ENCODE measurements at regions of chr3 and their contacts with region 1.

Region 1: DNA sequence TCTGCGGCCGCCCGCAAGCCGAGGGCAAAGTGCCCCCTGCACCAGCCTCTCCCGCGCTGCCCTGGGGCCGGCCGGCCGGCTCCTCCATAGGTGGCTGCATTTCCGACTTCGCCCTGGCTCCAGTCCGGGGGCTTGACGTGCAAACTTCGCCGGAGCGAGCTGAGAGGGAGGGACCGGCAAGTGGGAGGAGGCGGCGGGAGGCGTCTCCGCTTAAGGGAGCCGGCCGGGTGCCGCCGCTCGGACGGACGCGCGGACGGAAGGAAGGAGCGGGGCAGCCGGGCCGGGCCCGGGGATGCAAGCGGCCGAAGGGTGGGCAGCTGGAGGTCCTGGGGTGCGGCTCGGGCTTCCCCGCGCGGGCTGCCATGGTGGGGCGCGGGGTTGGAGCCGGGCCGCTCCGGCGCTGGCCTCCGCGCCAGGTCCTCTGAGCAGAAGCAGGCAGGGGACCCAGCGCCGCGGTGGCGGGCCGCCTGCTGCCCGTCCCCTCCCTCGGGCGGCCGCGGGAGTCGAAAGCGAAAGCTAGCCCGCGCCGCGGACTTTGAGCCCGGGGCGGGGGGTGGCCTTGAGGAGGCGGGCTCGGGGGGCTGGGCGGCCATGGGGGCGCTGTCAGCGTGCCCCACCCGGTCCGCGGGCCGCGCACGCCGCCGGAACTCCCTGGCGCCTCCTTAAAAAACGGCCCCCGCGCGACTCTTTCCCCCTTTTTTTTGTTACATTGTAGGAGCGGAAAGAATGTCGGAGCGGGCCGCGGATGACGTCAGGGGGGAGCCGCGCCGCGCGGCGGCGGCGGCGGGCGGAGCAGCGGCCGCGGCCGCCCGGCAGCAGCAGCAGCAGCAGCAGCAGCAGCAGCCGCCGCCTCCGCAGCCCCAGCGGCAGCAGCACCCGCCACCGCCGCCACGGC is at the start of gene SCAANT1:
- DNase-seq: peak; percentile 92 to 95
- H3K4me3 ChIP-seq: peak within 1 kb of the TSS; percentile 73 to 86 (median 79)
- H3K27ac ChIP-seq: peak within 1 kb of the TSS; percentile 86 to 99 (median 96)
- H3K4me1 ChIP-seq: peaks cover 20 to 26% of the 10 kb centered on the region in 2 donors
- H3K27me3 ChIP-seq: no peaks in the 10 kb centered on the region
- CTCF ChIP-seq: peak in 4 of 6 experiments; percentile 10 to 38 (median 17)
- POLR2A ChIP-seq: peak in 1 of 2 donors; percentile 74
- total RNA-seq, gene SCAANT1: not detected

Region 2: DNA sequence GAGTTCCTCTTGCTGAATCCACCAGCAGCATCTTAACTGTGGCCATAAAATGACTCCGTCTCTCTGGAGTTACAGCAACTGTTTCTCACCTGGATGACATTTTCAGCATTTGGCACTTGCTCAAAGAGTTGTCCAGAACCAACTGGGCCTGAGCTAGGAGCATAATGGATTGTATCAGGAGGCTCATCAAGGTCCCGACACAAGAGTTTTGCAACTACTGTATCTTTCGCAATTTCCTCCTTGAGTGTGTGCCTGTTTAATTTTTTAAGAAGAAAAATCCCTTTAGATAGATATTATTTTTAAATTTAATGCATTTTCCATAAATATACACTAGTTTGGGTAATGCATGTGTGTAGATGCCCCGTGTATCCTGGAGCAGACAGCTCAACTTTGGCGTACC is 137.3 kb before region 1 on chr3:
- intact Hi-C with region 1: no loop called
- DNase-seq: no peak
- H3K4me3 ChIP-seq: no peak overlapping the region
- H3K27ac ChIP-seq: no peak overlapping the region
- H3K4me1 ChIP-seq: no peaks in the 10 kb centered on the region
- H3K27me3 ChIP-seq: no peaks in the 10 kb centered on the region
- CTCF ChIP-seq: no peak
- POLR2A ChIP-seq: no peak

Region 3: DNA sequence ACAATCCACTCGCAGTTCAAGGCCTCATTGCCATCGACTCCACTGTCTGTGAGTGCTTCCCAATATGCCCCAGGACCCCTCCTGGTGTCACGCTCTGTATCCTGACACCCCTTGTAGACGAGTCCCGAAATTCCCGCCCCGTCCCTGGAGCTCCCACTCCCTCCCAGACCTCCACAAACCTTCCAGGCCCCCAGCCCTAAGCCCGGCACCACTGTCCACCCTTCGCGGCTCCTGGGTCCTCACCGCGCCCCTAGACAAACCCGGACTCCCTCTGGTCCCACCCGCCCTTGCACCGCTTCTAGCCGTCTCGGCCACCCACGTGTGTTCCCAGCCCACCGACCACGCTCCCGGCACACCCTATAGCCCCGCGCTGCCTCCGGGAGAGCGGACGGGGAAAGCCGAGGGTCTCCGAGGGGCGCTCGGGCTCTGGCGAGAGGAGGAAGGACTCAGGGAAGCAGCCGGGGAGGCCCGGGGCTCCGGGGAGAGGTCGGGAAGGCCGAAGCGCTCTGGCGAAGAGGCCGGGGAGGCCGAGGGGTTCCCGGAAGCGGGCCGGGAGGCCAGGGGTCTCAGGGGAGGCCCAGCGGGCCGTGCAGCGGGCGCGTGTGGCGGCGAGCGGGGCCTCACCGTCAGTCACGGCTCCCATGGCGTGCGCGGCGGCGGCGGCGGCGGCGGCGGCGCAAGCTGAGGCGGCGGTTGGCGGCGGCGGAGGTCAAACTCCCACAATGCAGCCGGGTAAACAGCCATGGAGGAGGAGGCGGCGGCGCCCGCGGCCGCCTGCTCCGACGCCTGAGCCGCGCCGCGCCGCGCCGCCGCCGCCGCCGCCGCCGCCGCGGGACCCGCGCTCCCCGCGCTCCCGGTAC is 48.7 kb before region 1 on chr3 and contains the starts of genes ATXN7 and THOC7:
- intact Hi-C with region 1: loop called (anchors 10 kb)
- DNase-seq: peak; percentile 58 to 64
- H3K4me3 ChIP-seq: peak within 1 kb of the TSS; percentile 68 to 97 (median 93)
- H3K27ac ChIP-seq: peak within 1 kb of the TSS; percentile 86 to 93 (median 87)
- H3K4me1 ChIP-seq: peaks cover 14% of the 10 kb centered on the region in 2 donors
- H3K27me3 ChIP-seq: no peaks in the 10 kb centered on the region
- CTCF ChIP-seq: no peak
- POLR2A ChIP-seq: peak in 1 of 2 donors; percentile 58
- total RNA-seq, gene ATXN7: 23.2 to 51.8 (median 33.8) TPM
- total RNA-seq, gene THOC7: 39.7 to 80.9 (median 43.1) TPM